ENCODE measurements at regions of chr12 and their contacts with region 1.

Region 1: GRCh38 chr12:86914716-86915115 is 658.5 kb upstream of the MGAT4C start:
- DNase-seq: no peak
- ATAC-seq: peak in 1 of 2 donors; percentile 45
- H3K4me3 ChIP-seq: no peak overlapping the region
- H3K27ac ChIP-seq: no peak overlapping the region
- H3K4me1 ChIP-seq: no peaks in the 10 kb centered on the region
- H3K27me3 ChIP-seq: no peaks in the 10 kb centered on the region

Region 2: GRCh38 chr12:85927166-85927565 is 987.5 kb before region 1 on chr12:
- intact Hi-C with region 1: loop called in 1 of 4 experiments (anchors 5 kb)
- DNase-seq: no peak
- ATAC-seq: no peak
- H3K4me3 ChIP-seq: no peak overlapping the region
- H3K27ac ChIP-seq: no peak overlapping the region
- H3K4me1 ChIP-seq: no peaks in the 10 kb centered on the region
- H3K27me3 ChIP-seq: no peaks in the 10 kb centered on the region

Region 3: DNA sequence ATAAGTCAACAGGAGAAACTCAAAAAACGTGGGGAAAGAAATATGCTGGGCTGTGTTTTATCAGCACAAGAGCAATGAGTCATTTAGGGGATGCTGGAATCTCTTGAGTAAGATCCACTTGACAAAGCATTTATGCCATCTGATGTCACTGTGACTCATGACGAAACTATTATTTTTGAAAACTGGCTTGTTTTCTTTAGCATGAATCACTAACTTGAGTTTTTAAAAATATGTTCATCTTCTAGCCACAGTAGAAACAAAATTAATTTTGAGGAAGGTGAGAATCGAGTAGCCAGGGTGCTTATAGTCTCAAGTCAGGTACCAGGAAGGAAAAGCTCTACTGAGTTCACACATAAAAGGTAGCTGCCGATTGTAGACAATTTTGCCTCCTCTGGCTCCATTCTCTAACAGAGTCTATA is 202.3 kb before region 1 on chr12:
- intact Hi-C with region 1: no loop called
- DNase-seq: no peak
- ATAC-seq: no peak
- H3K4me3 ChIP-seq: no peak overlapping the region
- H3K27ac ChIP-seq: no peak overlapping the region
- H3K4me1 ChIP-seq: no peaks in the 10 kb centered on the region
- H3K27me3 ChIP-seq: no peaks in the 10 kb centered on the region